Activated CD4-positive, alpha-beta memory T cell treated with anti-CD3 and anti-CD28 coated beads, Interleukin-2, amount 10 ng/mL, durations not matched to agents 7 days and 5 days (primary cell): ENCODE measurements at regions of chr17 and their contacts with region 1.

Region 1: GRCh38 chr17:55348749-55349354 is 72.8 kb downstream of the MMD start:
- DNase-seq: peak; percentile 46
- H3K4me3 Mint-ChIP-seq: no peak overlapping the region
- H3K27ac Mint-ChIP-seq: no peak overlapping the region
- H3K4me1 Mint-ChIP-seq: peaks cover 48% of the 10 kb centered on the region
- H3K27me3 Mint-ChIP-seq: no peaks in the 10 kb centered on the region

Region 2: DNA sequence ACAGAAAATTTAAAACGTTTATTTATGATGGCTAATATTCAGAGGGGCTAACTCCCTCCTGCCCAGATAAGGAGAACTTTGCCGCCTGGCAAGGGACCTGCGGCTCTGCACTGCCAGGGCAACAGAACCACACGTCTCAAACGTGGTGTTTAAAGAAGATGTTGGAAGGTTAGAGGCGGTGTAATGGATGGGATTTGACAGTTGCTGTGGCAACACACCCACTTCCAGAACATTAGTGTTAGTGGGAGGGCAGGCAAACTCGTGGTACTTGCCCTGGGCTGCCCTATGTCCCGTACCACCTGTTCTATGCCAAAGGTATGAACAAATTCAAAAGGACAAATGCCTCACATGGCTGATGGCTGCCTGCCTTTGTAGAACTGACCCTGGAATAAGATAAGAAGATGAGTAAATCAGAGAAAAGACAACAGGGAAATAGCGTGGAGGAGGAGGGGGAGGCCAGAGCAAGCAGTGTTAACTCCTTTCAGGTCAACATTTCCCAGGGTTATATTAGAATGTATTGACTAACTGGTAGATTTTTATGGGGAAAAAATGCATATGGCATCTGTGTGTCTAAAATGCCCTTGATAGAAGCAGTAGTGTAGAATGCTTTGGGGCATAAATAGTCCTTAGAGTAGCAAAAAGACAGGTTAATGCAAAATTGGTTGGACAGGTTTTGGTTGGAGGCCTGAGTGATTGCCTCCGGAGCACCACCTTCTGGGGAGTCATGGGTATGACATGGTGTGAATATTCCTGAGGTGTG is 53.3 kb before region 1 on chr17:
- CTCF ChIA-PET with region 1: interaction called, 13 read pairs
- POLR2A ChIA-PET with region 1: interaction called, 3 read pairs
- DNase-seq: peak; percentile 59
- H3K4me3 Mint-ChIP-seq: no peak overlapping the region
- H3K27ac Mint-ChIP-seq: no peak overlapping the region
- H3K4me1 Mint-ChIP-seq: no peaks in the 10 kb centered on the region
- H3K27me3 Mint-ChIP-seq: no peaks in the 10 kb centered on the region

Region 3: GRCh38 chr17:55314784-55315491 is 33.9 kb before region 1 on chr17:
- CTCF ChIA-PET with region 1: interaction called, 4 read pairs
- POLR2A ChIA-PET with region 1: interaction called, 10 read pairs
- DNase-seq: peak; percentile 37
- H3K4me3 Mint-ChIP-seq: peak overlapping the region; percentile 15
- H3K27ac Mint-ChIP-seq: peak overlapping the region; percentile 64
- H3K4me1 Mint-ChIP-seq: peaks cover 31% of the 10 kb centered on the region
- H3K27me3 Mint-ChIP-seq: no peaks in the 10 kb centered on the region

Region 4: DNA sequence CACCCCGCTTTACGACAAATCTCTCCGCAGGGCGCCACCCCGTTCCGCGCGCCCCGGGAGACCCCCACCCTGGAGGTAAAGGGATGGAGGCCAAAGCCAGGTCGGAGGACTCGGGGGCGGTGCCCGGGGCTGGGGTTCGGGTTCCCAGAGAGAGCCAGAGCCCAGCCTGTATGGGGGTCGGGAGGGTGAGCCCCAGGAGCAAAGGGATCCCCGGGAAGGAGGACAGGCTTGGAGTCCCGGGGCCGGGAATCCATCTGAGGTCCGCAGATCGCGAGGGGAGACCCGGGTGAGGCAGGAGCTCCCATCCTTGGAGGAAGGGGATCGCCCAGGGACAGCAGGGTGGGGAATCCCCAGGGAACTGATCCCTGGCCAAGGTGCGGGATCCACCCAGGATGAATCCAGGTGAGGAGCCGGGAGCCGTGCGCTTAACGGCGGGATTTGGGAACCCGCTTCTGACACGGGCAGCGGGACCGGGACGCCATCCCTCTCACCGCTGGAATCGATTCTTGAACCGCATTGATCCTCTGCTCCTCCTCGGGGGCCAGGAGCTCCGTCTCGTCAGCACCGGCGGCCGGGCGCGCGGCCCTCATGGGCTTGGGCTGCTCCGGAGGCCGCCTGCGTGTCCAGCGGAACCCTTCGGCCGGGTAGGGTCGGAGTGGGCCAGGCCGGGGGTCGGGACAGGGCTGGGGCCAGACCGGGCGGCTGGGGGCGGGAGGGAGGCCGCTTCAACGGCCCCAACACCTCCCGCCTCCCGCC is 72.5 kb after region 1 on chr17 and contains the start of gene MMD:
- CTCF ChIA-PET with region 1: no interaction called
- POLR2A ChIA-PET with region 1: interaction called, 13 read pairs
- DNase-seq: peak; percentile 31
- H3K4me3 Mint-ChIP-seq: peak within 1 kb of the TSS; percentile 90
- H3K27ac Mint-ChIP-seq: peak within 1 kb of the TSS; percentile 98
- H3K4me1 Mint-ChIP-seq: peaks cover 44% of the 10 kb centered on the region
- H3K27me3 Mint-ChIP-seq: peaks cover 27% of the 10 kb centered on the region
- total RNA-seq, gene MMD: 29.6 to 30.8 TPM

Region 5: DNA sequence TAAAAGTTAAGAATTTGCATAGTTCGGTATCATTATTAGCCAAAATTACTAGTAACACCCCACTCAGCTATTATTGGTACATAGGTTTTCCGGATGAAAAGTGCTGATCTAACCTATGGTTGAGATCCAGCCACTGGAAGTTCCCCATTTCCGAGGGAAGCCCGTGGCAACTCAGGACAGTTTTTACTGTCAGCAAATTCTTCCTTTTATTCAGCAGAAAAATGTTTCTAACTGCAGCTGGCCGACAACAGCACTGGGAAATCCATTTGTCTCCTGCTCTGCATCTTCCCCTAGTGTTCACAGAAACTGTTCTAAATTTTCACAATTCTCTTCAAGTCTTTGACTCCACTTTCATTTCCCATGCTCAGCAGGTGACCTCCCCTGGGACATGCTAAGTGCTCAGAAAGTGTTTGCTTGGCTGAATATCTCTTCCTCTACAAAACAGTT is 88.3 kb after region 1 on chr17:
- CTCF ChIA-PET with region 1: no interaction called
- POLR2A ChIA-PET with region 1: no interaction called
- DNase-seq: no peak
- H3K4me3 Mint-ChIP-seq: no peak overlapping the region
- H3K27ac Mint-ChIP-seq: no peak overlapping the region
- H3K4me1 Mint-ChIP-seq: peaks cover 26% of the 10 kb centered on the region
- H3K27me3 Mint-ChIP-seq: peaks cover 5% of the 10 kb centered on the region